ENCODE measurements at regions of chr9 and their contacts with region 1.

Region 1: GRCh38 chr9:125372441-125373226 is 111.0 kb downstream of the GAPVD1 start:
- DNase-seq: no peak
- CTCF ChIP-seq: no peak

Region 2: DNA sequence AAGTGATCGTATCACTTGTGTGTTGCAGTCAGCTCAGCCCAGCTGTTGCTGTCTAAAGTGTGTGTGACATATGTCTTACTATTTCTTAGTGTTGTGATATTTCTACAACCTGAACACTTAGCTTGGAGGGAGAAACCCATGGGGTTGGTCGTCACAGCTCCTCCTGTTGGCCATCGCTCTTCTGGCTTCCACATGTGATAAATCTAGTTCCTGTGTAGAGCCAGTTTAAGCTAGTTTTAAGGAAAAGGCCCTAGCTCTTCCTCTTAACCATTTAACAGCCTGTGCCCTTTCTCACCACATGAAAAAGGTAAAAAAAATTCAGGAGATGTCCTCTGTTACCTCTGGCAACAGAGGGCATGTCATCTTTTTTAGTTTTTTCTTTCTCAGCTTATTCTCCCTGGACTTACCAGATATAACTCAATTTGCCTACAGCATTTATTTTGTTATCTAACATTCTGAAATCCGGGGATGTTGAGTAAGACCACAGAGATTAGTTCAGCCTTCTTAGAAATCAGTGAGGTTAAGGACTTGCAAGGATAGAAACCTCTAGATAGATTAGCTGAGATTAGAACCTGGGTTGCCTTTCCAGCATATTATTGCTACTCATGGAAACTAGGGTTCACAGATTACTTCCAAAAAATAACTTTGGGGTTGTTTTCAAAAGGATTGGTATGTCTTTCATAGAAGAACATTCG is 10.7 kb before region 1 on chr9:
- CTCF ChIA-PET with region 1: interaction called, 10 read pairs
- POLR2A ChIA-PET with region 1: no interaction called
- DNase-seq: no peak
- CTCF ChIP-seq: no peak